Colonic mucosa (tissue), 4 donors: ENCODE measurements at regions of chr16 and their contacts with region 1.

Region 1: GRCh38 chr16:50665128-50665878 is 15.8 kb downstream of the SNX20 start:
- DNase-seq: peak; percentile 87
- H3K4me3 ChIP-seq: peak overlapping the region; percentile 22
- H3K27ac ChIP-seq: no peak overlapping the region
- H3K4me1 ChIP-seq: no peaks in the 10 kb centered on the region
- H3K27me3 ChIP-seq: no peaks in the 10 kb centered on the region
- CTCF ChIP-seq: peak; percentile 77

Region 2: GRCh38 chr16:50210266-50211038 is 454.9 kb before region 1 on chr16:
- intact Hi-C with region 1: loop called (anchors 10 kb)
- DNase-seq: peak; percentile 76
- H3K4me3 ChIP-seq: no peak overlapping the region
- H3K27ac ChIP-seq: peak overlapping the region; percentile 46
- H3K4me1 ChIP-seq: peaks cover 20% of the 10 kb centered on the region
- H3K27me3 ChIP-seq: no peaks in the 10 kb centered on the region
- CTCF ChIP-seq: peak; percentile 66

Region 3: GRCh38 chr16:50368410-50369132 is 296.7 kb before region 1 on chr16 and contains the start of gene BRD7:
- intact Hi-C with region 1: loop called (anchors 5 kb)
- DNase-seq: peak; percentile 48
- H3K4me3 ChIP-seq: peak within 1 kb of the TSS; percentile 92
- H3K27ac ChIP-seq: no peak within 1 kb of the TSS
- H3K4me1 ChIP-seq: peaks cover 7% of the 10 kb centered on the region
- H3K27me3 ChIP-seq: no peaks in the 10 kb centered on the region
- CTCF ChIP-seq: no peak
- total RNA-seq, gene BRD7: 69.9 to 76.3 TPM

Region 4: GRCh38 chr16:50585331-50585776 is 79.9 kb before region 1 on chr16:
- intact Hi-C with region 1: no loop called
- DNase-seq: peak; percentile 49
- H3K4me3 ChIP-seq: no peak overlapping the region
- H3K27ac ChIP-seq: peak overlapping the region; percentile 8
- H3K4me1 ChIP-seq: no peaks in the 10 kb centered on the region
- H3K27me3 ChIP-seq: no peaks in the 10 kb centered on the region
- CTCF ChIP-seq: no peak

Region 5: GRCh38 chr16:50747207-50747956 is 82.1 kb after region 1 on chr16:
- intact Hi-C with region 1: loop called (anchors 5 kb)
- DNase-seq: no peak
- H3K4me3 ChIP-seq: no peak overlapping the region
- H3K27ac ChIP-seq: no peak overlapping the region
- H3K4me1 ChIP-seq: no peaks in the 10 kb centered on the region
- H3K27me3 ChIP-seq: no peaks in the 10 kb centered on the region
- CTCF ChIP-seq: no peak

Region 6: GRCh38 chr16:50806099-50807062 is 141.1 kb after region 1 on chr16:
- intact Hi-C with region 1: loop called (anchors 5 kb)
- DNase-seq: peak; percentile 85
- H3K4me3 ChIP-seq: no peak overlapping the region
- H3K27ac ChIP-seq: no peak overlapping the region
- H3K4me1 ChIP-seq: no peaks in the 10 kb centered on the region
- H3K27me3 ChIP-seq: no peaks in the 10 kb centered on the region
- CTCF ChIP-seq: peak; percentile 97